ENCODE measurements at regions of chr6 and their contacts with region 1.

Region 1: DNA sequence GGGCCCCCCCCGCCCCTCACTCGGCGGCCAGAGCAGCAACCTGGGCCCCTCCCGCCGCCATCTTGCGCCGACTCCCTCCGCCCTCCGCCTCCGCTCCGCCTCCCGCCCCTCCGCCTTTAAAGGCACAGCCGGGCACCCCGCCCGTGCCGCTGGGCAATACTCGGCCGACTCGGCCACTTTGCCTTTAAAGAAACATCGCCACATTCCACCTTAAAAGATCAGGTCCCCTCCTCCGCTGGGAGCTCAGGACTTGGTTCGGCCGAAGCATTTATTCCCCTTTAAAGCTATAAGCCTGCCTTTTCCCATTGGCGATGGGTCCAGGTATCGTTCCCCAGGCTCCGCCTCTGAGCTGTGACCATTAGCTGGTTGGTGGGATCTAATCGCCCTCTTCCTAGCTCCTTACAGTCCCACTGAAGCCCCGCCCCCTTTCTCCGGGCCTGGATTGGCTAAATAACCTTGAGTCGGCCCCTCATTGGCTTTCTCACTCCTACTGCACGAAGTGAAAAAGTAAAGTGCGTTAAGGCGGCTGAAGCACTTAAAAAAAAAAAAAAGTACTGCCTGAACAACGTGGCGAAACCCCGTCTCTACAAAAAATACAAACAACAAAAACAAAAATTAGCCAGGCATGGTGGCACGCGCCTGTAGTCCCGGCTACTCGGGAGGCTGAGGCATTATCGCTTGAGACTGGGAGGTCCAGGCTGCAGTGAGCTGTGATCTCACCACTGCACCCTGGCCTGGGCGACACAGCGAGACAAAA is at the start of gene ZBTB22:
- DNase-seq: peak; percentile 98
- ATAC-seq: peak; percentile 71
- H3K4me3 ChIP-seq: peak within 1 kb of the TSS; percentile 72
- H3K27ac ChIP-seq: peak within 1 kb of the TSS; percentile 57
- H3K4me1 ChIP-seq: peaks cover 54% of the 10 kb centered on the region
- H3K27me3 ChIP-seq: no peaks in the 10 kb centered on the region
- CTCF ChIP-seq: no peak
- total RNA-seq, gene ZBTB22: 18.8 and 19.8 TPM in 2 replicates

Region 2: GRCh38 chr6:31815025-31815838 is 1502.6 kb before region 1 on chr6 and contains the starts of genes HSPA1A and HSPA1L:
- CTCF ChIA-PET with region 1: no interaction called
- POLR2A ChIA-PET with region 1: interaction called, 14 read pairs
- intact Hi-C with region 1: no loop called
- DNase-seq: peak; percentile 98
- ATAC-seq: peak; percentile 76
- H3K4me3 ChIP-seq: peak within 1 kb of the TSS; percentile 87
- H3K27ac ChIP-seq: peak within 1 kb of the TSS; percentile 84
- H3K4me1 ChIP-seq: peaks cover 22% of the 10 kb centered on the region
- H3K27me3 ChIP-seq: no peaks in the 10 kb centered on the region
- CTCF ChIP-seq: no peak
- total RNA-seq, gene HSPA1A: 269 and 324 TPM in 2 replicates
- total RNA-seq, gene HSPA1L: 0.26 and 0.69 TPM in 2 replicates

Region 3: DNA sequence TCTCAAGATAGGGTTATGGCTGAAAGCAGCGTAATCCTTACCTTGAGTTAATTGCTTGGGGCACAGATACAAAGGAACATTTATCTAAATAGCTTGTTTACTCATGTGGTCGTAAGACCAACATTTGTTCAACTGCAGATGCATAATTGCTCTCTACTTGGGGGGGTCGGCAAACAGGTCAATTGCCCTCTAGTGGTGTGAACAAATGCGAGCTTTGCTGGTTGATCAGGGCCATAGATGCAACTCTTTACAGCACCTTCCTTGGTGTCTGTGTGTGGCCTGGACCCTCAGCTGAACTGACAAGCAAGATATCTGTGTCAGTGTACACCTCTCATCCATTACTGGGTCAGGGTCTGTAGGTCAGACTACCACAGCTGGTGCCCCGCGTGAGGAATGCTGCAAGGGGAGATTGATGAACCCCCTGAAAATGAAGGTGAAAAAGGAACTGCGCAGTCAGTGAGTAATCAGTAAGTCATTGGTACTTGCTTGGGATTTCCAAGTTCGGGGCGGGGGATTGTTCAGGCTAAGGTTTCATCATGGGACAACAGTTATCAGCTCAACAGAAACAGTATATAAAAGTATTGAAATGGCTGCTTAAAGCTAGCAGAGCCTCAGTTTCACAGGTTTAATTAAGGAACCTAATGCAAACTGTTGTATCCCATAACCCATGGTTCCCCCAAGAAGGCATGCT is 268.4 kb before region 1 on chr6:
- CTCF ChIA-PET with region 1: no interaction called
- POLR2A ChIA-PET with region 1: no interaction called
- intact Hi-C with region 1: no loop called
- DNase-seq: no peak
- ATAC-seq: no peak
- H3K4me3 ChIP-seq: no peak overlapping the region
- H3K27ac ChIP-seq: no peak overlapping the region
- H3K4me1 ChIP-seq: no peaks in the 10 kb centered on the region
- H3K27me3 ChIP-seq: peaks cover 55% of the 10 kb centered on the region
- CTCF ChIP-seq: peak; percentile 53

Region 4: GRCh38 chr6:33276864-33277662 is 40.8 kb before region 1 on chr6 and contains the start of gene B3GALT4:
- CTCF ChIA-PET with region 1: interaction called, 18 read pairs
- POLR2A ChIA-PET with region 1: no interaction called
- intact Hi-C with region 1: no loop called
- DNase-seq: peak; percentile 92
- ATAC-seq: peak; percentile 70
- H3K4me3 ChIP-seq: peak within 1 kb of the TSS; percentile 87
- H3K27ac ChIP-seq: peak within 1 kb of the TSS; percentile 77
- H3K4me1 ChIP-seq: peaks cover 42% of the 10 kb centered on the region
- H3K27me3 ChIP-seq: no peaks in the 10 kb centered on the region
- CTCF ChIP-seq: no peak
- total RNA-seq, gene B3GALT4: 7.9 and 8.4 TPM in 2 replicates

Region 5: GRCh38 chr6:33299237-33299944 is 18.5 kb before region 1 on chr6:
- CTCF ChIA-PET with region 1: interaction called, 5 read pairs
- POLR2A ChIA-PET with region 1: interaction called, 16 read pairs
- intact Hi-C with region 1: loop called (anchors 2 kb)
- DNase-seq: peak; percentile 93
- ATAC-seq: peak; percentile 55
- H3K4me3 ChIP-seq: peak overlapping the region; percentile 78
- H3K27ac ChIP-seq: peak overlapping the region; percentile 92
- H3K4me1 ChIP-seq: peaks cover 15% of the 10 kb centered on the region
- H3K27me3 ChIP-seq: no peaks in the 10 kb centered on the region
- CTCF ChIP-seq: peak; percentile 87

Region 6: DNA sequence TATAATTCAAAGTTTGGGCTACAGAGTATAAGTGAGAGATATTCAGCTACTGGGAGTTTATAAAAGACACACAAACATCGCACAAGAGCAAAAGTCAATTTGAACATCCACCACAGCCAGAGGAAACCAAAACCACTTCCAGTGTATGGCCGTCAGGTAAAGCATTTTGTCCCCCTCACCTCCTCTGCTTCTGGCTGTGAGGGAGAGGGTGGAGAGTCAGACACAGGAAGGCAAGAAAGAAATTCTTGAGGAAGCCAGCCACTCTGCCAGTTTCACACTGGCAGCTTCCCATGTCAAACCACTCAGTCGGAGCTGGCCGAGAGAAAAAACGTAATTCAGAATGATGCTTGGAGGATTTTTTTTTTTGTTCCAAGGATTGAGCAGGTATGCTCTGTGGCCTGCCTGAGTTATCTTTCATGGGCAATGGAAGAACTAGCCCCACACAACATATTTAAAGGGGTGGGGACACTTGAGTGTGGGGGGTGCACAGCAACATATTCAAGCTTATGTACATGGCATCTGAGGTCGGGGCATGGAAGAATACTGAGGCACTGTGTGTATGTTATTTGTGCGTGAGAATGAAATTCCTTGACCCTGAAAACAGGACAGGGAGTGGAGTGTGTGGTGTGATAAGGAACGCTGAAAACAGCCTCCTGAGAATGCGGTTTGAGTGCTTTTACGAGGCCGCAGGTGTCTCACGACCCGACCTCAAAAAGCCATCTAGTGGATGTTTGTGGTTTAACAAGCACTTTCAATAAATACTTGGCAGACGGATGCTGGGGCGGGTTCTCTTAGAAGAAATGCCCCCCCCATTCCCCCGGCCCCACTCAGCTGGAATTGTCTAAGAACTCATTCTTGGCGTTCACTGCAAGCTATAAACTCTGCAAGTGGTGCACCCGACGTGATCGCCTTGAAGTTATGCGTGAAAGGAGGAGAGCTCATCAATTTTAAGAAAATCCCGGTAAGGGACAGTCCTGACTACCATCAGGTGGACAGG is 27.2 kb after region 1 on chr6:
- CTCF ChIA-PET with region 1: no interaction called
- POLR2A ChIA-PET with region 1: interaction called, 22 read pairs
- intact Hi-C with region 1: no loop called
- DNase-seq: peak; percentile 93
- ATAC-seq: peak; percentile 59
- H3K4me3 ChIP-seq: peak overlapping the region; percentile 13; the same call in 1 of the 2 replicates
- H3K27ac ChIP-seq: 0 out of 2 replicates have a peak overlapping the region, but pooled peaks have one; percentile 5
- H3K4me1 ChIP-seq: peaks cover 5% of the 10 kb centered on the region
- H3K27me3 ChIP-seq: no peaks in the 10 kb centered on the region
- CTCF ChIP-seq: peak; percentile 58

Region 7: DNA sequence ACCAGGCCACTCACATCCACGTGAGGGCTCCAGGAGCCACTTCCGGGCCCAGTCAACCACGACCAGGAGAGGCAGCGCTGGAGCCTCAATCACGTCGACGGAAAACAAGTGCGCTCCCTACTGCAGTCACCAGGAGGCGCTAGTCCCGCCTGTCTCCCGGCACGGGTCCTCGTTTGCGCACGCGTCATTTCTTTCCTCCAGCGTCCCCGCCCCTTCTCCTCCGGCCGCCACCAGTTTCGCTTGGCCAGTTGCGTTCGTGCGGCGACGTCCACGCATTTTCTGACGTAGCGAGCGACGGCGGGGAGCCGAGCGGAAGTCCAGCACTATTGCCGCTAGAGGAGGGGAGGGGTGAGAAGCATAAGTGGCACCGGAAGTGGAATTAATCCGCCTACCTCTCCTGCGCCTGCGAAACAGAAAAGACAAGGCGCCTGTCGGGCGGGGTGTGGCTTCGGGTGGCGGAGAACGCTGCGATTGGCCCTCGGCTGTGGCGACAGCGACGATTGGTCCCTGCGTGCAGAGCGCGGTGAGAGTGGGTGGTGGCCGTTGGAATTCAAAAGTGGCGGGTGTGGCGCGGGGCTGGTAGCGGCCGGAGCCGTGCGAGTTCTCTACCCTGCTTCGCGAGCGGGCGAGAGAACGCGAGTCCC is 73.6 kb after region 1 on chr6 and contains the start of gene KIFC1:
- CTCF ChIA-PET with region 1: interaction called, 5 read pairs
- POLR2A ChIA-PET with region 1: no interaction called
- intact Hi-C with region 1: loop called (anchors 2 kb)
- DNase-seq: peak; percentile 99
- ATAC-seq: peak; percentile 96
- H3K4me3 ChIP-seq: peak within 1 kb of the TSS; percentile 79
- H3K27ac ChIP-seq: peak within 1 kb of the TSS; percentile 61
- H3K4me1 ChIP-seq: peaks cover 23% of the 10 kb centered on the region
- H3K27me3 ChIP-seq: no peaks in the 10 kb centered on the region
- CTCF ChIP-seq: peak; percentile 89
- total RNA-seq, gene KIFC1: 60.6 and 66.7 TPM in 2 replicates

Measured in PC-3 (cell line).